ENCODE measurements at regions of chr11 and their contacts with region 1.

Region 1: GRCh38 chr11:118145285-118146227 is 7.1 kb downstream of the SCN4B start:
- DNase-seq: peak; percentile 89
- H3K4me3 ChIP-seq: peak overlapping the region; percentile 45 to 63 (median 56)
- H3K27ac ChIP-seq: peak overlapping the region; percentile 48
- H3K4me1 ChIP-seq: peaks cover 25% of the 10 kb centered on the region
- H3K27me3 ChIP-seq: no peaks in the 10 kb centered on the region
- CTCF ChIP-seq: peak; percentile 80 to 88

Region 2: GRCh38 chr11:118076754-118077281 is 68.7 kb before region 1 on chr11 and contains the start of gene TMPRSS4:
- CTCF ChIA-PET with region 1: no interaction called
- dilution Hi-C with region 1: no loop called
- in situ Hi-C with region 1: no loop called
- intact Hi-C with region 1: loop called (anchors 5 kb)
- DNase-seq: peak; percentile 87
- H3K4me3 ChIP-seq: no peak within 1 kb of the TSS
- H3K27ac ChIP-seq: peak within 1 kb of the TSS; percentile 7
- H3K4me1 ChIP-seq: peaks cover 58% of the 10 kb centered on the region
- H3K27me3 ChIP-seq: no peaks in the 10 kb centered on the region
- CTCF ChIP-seq: no peak
- total RNA-seq, gene TMPRSS4: 0.67 to 2.9 TPM

Region 3: DNA sequence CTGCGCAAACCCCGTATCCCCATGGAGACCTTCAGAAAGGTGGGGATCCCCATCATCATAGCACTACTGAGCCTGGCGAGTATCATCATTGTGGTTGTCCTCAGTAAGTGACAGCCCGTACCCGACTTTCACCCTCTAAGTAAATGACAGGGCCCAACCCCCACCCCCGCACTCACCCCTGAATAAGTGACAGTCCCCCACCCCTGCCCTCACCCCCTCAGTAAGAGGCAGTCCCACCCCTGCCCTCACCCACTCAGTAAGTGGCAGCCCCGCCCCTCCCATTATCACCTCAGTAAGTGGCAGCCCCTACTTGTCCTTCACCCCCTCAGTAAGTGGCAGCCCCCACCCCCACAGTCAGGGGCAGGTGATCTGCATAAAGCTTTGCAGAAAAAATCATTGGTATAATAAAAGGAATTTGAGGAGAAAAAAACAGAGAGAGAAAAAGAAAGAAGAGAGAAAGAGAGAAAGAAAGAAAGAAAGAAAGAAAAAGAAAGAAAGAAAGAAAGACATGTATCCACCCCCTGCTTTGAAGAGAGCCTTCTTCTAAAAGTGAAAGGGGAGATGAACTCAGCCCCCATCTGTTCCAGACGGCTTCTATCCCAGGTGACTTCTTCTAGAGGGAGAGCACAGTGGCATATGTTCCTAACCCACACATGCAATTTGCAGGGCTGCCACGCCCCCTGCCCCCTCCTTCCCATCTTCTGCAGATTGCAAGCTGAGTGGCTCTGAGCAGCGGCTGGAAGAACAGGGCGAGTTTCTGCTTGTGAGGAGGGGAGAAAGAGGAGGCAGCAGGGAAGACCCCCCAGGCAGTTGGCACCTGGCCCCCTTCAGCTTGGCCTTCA is 46.3 kb before region 1 on chr11:
- CTCF ChIA-PET with region 1: no interaction called
- dilution Hi-C with region 1: no loop called
- in situ Hi-C with region 1: no loop called
- intact Hi-C with region 1: no loop called
- DNase-seq: no peak
- H3K4me3 ChIP-seq: no peak overlapping the region
- H3K27ac ChIP-seq: no peak overlapping the region
- H3K4me1 ChIP-seq: no peaks in the 10 kb centered on the region
- H3K27me3 ChIP-seq: no peaks in the 10 kb centered on the region
- CTCF ChIP-seq: no peak

Region 4: GRCh38 chr11:118117790-118118601 is 27.6 kb before region 1 on chr11:
- CTCF ChIA-PET with region 1: no interaction called
- dilution Hi-C with region 1: no loop called
- in situ Hi-C with region 1: no loop called
- intact Hi-C with region 1: no loop called
- DNase-seq: no peak
- H3K4me3 ChIP-seq: no peak overlapping the region
- H3K27ac ChIP-seq: no peak overlapping the region
- H3K4me1 ChIP-seq: peaks cover 7% of the 10 kb centered on the region
- H3K27me3 ChIP-seq: no peaks in the 10 kb centered on the region
- CTCF ChIP-seq: no peak

Region 5: DNA sequence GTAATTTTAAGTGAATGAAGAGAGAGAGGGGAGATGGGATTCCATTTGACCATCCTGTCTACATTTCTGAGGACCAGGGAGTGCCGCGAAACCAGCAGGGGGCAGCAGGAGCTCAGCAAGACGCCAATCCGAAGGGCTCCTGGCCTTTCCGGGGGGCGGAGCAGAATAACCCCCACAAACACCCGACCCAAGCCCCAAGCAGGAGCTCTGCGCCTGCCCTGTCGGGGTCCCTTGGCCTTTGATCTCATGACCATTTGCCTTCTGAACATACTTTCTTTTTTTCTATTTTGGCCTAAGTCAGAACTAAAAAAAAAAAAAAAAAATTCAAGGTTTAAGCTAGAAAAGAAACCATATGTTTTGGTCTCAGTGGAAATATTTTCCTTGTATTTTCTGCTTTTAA is 52.8 kb after region 1 on chr11:
- CTCF ChIA-PET with region 1: no interaction called
- dilution Hi-C with region 1: no loop called
- in situ Hi-C with region 1: no loop called
- intact Hi-C with region 1: loop called (anchors 1 kb)
- DNase-seq: peak; percentile 29
- H3K4me3 ChIP-seq: peak overlapping the region in 1 of 3 experiments; percentile 30
- H3K27ac ChIP-seq: no peak overlapping the region
- H3K4me1 ChIP-seq: peaks cover 18% of the 10 kb centered on the region
- H3K27me3 ChIP-seq: no peaks in the 10 kb centered on the region
- CTCF ChIP-seq: peak; percentile 85 to 97

Region 6: DNA sequence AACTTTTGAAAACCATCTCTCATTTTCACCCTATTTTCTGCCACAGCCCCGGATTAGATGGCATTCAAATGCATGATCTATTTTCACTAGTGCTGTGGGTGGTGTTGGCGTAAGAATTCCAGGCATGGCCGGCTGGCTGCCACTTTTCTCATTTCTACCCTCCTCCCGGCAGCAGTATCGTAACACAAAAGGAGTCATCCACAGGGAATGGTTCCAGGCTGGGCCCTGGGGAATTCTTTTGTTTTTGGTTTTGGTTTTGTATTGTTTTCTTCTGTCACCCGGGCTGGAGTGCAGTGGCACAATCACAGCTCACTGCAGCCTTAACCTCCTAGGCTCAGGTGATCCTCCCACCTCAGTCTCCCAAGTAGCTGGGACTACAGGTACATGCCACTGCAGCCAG is 65.5 kb after region 1 on chr11:
- CTCF ChIA-PET with region 1: no interaction called
- dilution Hi-C with region 1: no loop called
- in situ Hi-C with region 1: no loop called
- intact Hi-C with region 1: no loop called
- DNase-seq: peak; percentile 25
- H3K4me3 ChIP-seq: no peak overlapping the region
- H3K27ac ChIP-seq: no peak overlapping the region
- H3K4me1 ChIP-seq: peaks cover 10% of the 10 kb centered on the region
- H3K27me3 ChIP-seq: no peaks in the 10 kb centered on the region
- CTCF ChIP-seq: no peak

Region 7: DNA sequence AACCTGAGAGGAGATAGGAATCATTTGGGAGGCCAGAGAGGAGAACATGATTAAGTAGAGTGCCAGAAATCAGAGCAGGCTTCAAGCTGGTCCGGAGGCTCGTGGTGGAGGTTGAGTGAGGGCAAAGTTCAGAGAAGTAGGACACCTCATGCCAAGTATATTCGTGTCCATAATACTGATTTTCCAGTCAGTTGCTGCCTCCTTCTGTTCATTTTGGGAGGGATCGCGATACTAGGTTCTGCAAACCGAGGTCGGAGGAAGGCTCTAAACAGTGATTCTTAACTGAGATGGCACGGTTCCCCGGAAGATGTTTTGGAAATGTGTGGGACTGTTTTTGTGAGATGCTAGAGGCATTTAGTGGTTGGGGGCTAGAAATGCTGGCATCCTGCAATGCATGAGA is 145.4 kb after region 1 on chr11:
- CTCF ChIA-PET with region 1: no interaction called
- dilution Hi-C with region 1: no loop called
- in situ Hi-C with region 1: no loop called
- intact Hi-C with region 1: loop called (anchors 1 kb)
- DNase-seq: peak; percentile 63
- H3K4me3 ChIP-seq: no peak overlapping the region
- H3K27ac ChIP-seq: no peak overlapping the region
- H3K4me1 ChIP-seq: peaks cover 30% of the 10 kb centered on the region
- H3K27me3 ChIP-seq: no peaks in the 10 kb centered on the region
- CTCF ChIP-seq: peak; percentile 67 to 68

Region 8: DNA sequence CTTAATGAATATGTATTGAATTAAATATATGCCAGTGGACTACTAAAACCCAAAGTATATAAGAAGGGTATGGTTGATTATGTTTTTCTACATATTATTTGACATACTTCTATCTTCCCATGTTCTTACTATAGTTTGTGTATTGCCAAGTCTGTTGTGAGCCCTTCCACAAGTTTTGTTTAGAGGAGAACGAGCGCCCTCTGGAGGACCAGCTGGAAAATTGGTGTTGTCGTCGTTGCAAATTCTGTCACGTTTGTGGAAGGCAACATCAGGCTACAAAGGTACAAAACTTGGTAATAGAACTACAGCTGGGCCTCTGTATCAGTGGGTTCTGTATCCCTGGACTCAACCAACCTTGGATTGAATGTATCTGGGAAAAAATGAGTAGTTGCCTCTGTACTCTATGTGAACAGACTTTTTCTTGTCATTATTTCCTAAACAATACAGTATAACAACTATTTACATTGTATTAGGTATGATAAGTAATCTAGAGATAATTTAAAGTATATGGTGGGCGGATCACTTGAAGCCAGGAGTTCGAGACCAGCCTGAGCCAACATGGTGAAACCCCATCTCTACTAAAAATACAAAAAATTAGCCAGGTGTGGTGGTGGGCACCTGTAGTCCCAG is 343.0 kb after region 1 on chr11:
- CTCF ChIA-PET with region 1: no interaction called
- dilution Hi-C with region 1: no loop called
- in situ Hi-C with region 1: no loop called
- intact Hi-C with region 1: loop called (anchors 1 kb)
- DNase-seq: peak; percentile 47
- H3K4me3 ChIP-seq: no peak overlapping the region
- H3K27ac ChIP-seq: no peak overlapping the region
- H3K4me1 ChIP-seq: no peaks in the 10 kb centered on the region
- H3K27me3 ChIP-seq: no peaks in the 10 kb centered on the region
- CTCF ChIP-seq: peak; percentile 83 to 91

Region 9: DNA sequence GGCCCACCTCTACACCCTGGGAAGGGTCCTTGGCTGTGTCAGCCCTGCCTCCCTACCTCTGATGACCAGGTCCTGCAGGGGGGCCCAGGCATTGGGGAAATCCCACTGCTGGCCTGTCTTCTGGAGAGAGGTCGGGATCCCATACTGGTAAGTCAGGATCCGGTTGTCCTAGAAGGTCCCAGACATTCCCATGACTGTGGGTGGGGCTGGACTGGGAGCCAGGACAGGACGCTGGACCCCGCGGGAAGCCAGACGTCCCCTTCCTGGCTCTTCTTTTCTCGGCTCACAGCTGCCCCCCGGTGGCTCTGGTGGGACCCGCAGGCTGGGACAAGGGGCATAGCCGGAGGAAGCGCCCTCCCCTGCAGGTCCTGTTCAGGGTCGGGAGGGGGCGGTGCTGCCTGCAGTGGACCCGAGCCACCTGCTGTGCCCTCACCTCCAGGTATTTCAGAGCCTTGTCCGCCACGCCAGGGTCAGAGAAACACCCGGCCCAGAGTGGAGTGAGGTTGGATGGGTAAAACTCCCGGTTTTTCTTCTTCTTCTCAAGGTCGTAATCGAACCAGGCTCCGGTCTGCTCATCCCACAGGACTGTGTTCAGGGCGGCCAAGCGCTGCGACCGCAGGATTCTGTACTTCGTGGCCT is 513.9 kb after region 1 on chr11:
- CTCF ChIA-PET with region 1: no interaction called
- dilution Hi-C with region 1: no loop called
- in situ Hi-C with region 1: no loop called
- intact Hi-C with region 1: loop called (anchors 10 kb)
- DNase-seq: peak; percentile 58
- H3K4me3 ChIP-seq: no peak overlapping the region
- H3K27ac ChIP-seq: no peak overlapping the region
- H3K4me1 ChIP-seq: peaks cover 23% of the 10 kb centered on the region
- H3K27me3 ChIP-seq: no peaks in the 10 kb centered on the region
- CTCF ChIP-seq: peak; percentile 81 to 85

Measured in mammary epithelial cell (primary cell).